Activated naive CD4-positive, alpha-beta T cell treated with anti-CD3 and anti-CD28 coated beads for 36 hours (primary cell): ENCODE measurements at regions of chr17 and their contacts with region 1.

Region 1: GRCh38 chr17:19766422-19767270 is 18.5 kb upstream of the ALDH3A1 start:
- DNase-seq: peak; percentile 87
- H3K4me3 Mint-ChIP-seq: no peak overlapping the region
- H3K27ac Mint-ChIP-seq: peak overlapping the region; percentile 34
- H3K4me1 Mint-ChIP-seq: peaks cover 45% of the 10 kb centered on the region
- H3K27me3 Mint-ChIP-seq: no peaks in the 10 kb centered on the region

Region 2: GRCh38 chr17:19362277-19363113 is 404.2 kb before region 1 on chr17 and contains the start of gene B9D1:
- CTCF ChIA-PET with region 1: interaction called, 10 read pairs
- intact Hi-C with region 1: loop called (anchors 2 kb)
- DNase-seq: peak; percentile 93
- H3K4me3 Mint-ChIP-seq: peak within 1 kb of the TSS; percentile 87
- H3K27ac Mint-ChIP-seq: peak within 1 kb of the TSS; percentile 33
- H3K4me1 Mint-ChIP-seq: peaks cover 5% of the 10 kb centered on the region
- H3K27me3 Mint-ChIP-seq: peaks cover 2% of the 10 kb centered on the region
- total RNA-seq, gene B9D1: 8.7 TPM

Region 3: GRCh38 chr17:19447085-19447583 is 319.5 kb before region 1 on chr17:
- CTCF ChIA-PET with region 1: no interaction called
- intact Hi-C with region 1: loop called (anchors 5 kb)
- DNase-seq: peak; percentile 79
- H3K4me3 Mint-ChIP-seq: no peak overlapping the region
- H3K27ac Mint-ChIP-seq: no peak overlapping the region
- H3K4me1 Mint-ChIP-seq: no peaks in the 10 kb centered on the region
- H3K27me3 Mint-ChIP-seq: peaks cover 5% of the 10 kb centered on the region

Region 4: DNA sequence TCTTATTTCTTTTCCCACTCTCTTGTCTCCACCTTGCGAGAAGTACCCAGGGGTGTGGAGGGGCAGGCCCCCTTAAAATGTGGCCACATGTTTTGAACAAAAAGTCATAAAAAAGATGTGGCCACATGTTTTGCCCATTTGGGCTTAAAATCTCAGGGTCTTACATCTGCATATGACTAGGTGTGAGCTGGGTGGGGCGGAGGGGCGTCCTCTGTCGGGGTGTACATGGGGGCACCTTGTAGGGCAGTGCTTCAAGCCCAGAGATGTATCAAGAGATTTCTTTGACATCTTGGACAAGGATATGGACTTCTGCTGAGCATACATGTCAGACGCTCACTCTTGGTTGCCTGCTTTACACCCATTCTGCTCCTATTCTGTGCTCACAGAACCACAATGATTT is 246.0 kb before region 1 on chr17:
- CTCF ChIA-PET with region 1: interaction called, 20 read pairs
- intact Hi-C with region 1: no loop called
- DNase-seq: no peak
- H3K4me3 Mint-ChIP-seq: no peak overlapping the region
- H3K27ac Mint-ChIP-seq: no peak overlapping the region
- H3K4me1 Mint-ChIP-seq: peaks cover 12% of the 10 kb centered on the region
- H3K27me3 Mint-ChIP-seq: no peaks in the 10 kb centered on the region

Region 5: GRCh38 chr17:19648475-19649406 is 117.9 kb before region 1 on chr17 and contains the start of gene ALDH3A2:
- CTCF ChIA-PET with region 1: interaction called, 20 read pairs
- intact Hi-C with region 1: loop called (anchors 2 kb)
- DNase-seq: peak; percentile 94
- H3K4me3 Mint-ChIP-seq: peak within 1 kb of the TSS; percentile 90
- H3K27ac Mint-ChIP-seq: peak within 1 kb of the TSS; percentile 73
- H3K4me1 Mint-ChIP-seq: peaks cover 32% of the 10 kb centered on the region
- H3K27me3 Mint-ChIP-seq: no peaks in the 10 kb centered on the region
- total RNA-seq, gene ALDH3A2: 21.0 to 22.3 TPM

Region 6: DNA sequence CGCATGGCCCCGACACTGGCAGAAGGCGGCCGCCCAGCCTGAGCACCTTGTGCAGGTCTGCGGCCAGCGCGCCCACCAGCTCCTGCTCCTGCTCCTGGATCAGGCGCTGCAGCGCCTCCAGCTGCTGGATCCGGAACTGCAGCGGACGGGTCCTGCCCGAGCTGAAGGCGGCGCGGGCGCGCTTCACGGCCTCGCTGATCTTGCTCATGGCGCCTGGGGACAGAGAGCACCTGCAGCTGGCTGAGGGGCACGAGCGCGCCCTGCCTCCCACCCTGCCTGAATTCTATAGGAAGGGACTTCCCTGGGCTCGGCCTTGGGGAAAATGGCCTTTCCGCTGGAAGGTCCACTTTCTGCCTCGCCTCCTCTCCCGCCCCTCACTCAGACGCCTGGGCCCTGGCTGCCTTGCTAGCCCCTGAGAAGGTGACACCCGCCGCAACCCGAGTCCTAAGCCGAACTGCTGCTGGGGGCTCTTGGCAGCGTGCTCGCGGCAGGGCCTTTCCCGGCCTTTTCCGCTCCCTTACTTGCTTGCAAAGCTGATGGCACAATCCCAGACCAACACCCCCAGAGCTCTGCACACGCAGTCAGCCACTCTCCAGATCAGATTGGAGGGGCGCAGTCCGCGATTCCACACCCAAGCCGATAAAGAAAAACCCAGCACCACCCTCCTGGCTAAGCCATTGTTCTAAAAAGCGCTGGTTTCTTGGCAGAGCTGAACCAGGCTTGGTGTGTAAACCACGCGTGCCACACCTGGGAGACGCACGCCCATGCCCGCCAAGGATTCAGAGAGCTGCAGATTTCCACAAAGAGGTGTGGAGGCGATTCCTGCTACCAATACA is 21.5 kb before region 1 on chr17:
- CTCF ChIA-PET with region 1: interaction called, 21 read pairs
- intact Hi-C with region 1: loop called (anchors 2 kb)
- DNase-seq: peak; percentile 94
- H3K4me3 Mint-ChIP-seq: peak overlapping the region; percentile 61
- H3K27ac Mint-ChIP-seq: no peak overlapping the region
- H3K4me1 Mint-ChIP-seq: peaks cover 6% of the 10 kb centered on the region
- H3K27me3 Mint-ChIP-seq: peaks cover 4% of the 10 kb centered on the region

Region 7: GRCh38 chr17:19867064-19867313 is 100.3 kb after region 1 on chr17:
- CTCF ChIA-PET with region 1: no interaction called
- intact Hi-C with region 1: loop called (anchors 5 kb)
- DNase-seq: peak; percentile 69
- H3K4me3 Mint-ChIP-seq: peak overlapping the region; percentile 80
- H3K27ac Mint-ChIP-seq: peak overlapping the region; percentile 50
- H3K4me1 Mint-ChIP-seq: peaks cover 31% of the 10 kb centered on the region
- H3K27me3 Mint-ChIP-seq: no peaks in the 10 kb centered on the region